ENCODE measurements at regions of chr10 and their contacts with region 1.

Region 1: GRCh38 chr10:117537436-117537903 is 5.1 kb upstream of the EMX2 start:
- DNase-seq: no peak
- H3K4me3 ChIP-seq: no peak overlapping the region
- H3K27ac ChIP-seq: no peak overlapping the region
- H3K4me1 ChIP-seq: no peaks in the 10 kb centered on the region
- H3K27me3 ChIP-seq: peaks cover 100% of the 10 kb centered on the region
- CTCF ChIP-seq: no peak; the same call in 1 of the 2 replicates

Region 2: GRCh38 chr10:117757086-117757720 is 219.7 kb after region 1 on chr10:
- CTCF ChIA-PET with region 1: no interaction called
- POLR2A ChIA-PET with region 1: no interaction called
- intact Hi-C with region 1: loop called (anchors 10 kb)
- DNase-seq: no peak
- H3K4me3 ChIP-seq: no peak overlapping the region
- H3K27ac ChIP-seq: no peak overlapping the region
- H3K4me1 ChIP-seq: no peaks in the 10 kb centered on the region
- H3K27me3 ChIP-seq: peaks cover 56% of the 10 kb centered on the region
- CTCF ChIP-seq: no peak

Region 3: GRCh38 chr10:117876210-117876609 is 338.7 kb after region 1 on chr10:
- CTCF ChIA-PET with region 1: no interaction called
- POLR2A ChIA-PET with region 1: no interaction called
- intact Hi-C with region 1: no loop called
- DNase-seq: no peak
- H3K4me3 ChIP-seq: no peak overlapping the region
- H3K27ac ChIP-seq: no peak overlapping the region
- H3K4me1 ChIP-seq: no peaks in the 10 kb centered on the region
- H3K27me3 ChIP-seq: peaks cover 16% of the 10 kb centered on the region
- CTCF ChIP-seq: no peak

Region 4: GRCh38 chr10:118046395-118047156 is 509.1 kb after region 1 on chr10 and contains the start of gene RAB11FIP2:
- CTCF ChIA-PET with region 1: no interaction called
- POLR2A ChIA-PET with region 1: no interaction called
- intact Hi-C with region 1: loop called (anchors 10 kb)
- DNase-seq: peak; percentile 92
- H3K4me3 ChIP-seq: peak within 1 kb of the TSS; percentile 70
- H3K27ac ChIP-seq: peak within 1 kb of the TSS; percentile 93
- H3K4me1 ChIP-seq: peaks cover 21% of the 10 kb centered on the region
- H3K27me3 ChIP-seq: no peaks in the 10 kb centered on the region
- CTCF ChIP-seq: peak; percentile 40
- total RNA-seq, gene RAB11FIP2: 18.5 and 20.4 TPM in 2 replicates

Region 5: DNA sequence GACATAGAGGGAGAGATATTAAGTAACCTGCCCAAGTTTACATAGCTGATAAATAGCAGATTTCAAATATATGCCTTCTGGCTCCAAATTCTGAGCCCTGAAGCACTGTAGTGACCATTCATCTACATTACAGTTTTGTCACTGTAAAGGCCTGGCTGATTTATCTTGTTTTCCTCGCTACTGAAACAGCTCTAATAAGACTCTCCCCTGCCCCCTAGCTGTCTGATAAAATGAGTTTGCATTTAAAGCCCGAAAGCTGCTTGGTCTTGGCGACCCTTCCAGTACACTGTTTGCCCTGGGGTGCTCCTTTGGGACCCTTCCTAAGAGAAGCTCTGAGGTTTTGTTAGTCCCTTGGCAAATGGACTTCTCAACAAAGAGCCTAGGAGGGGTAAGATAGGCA is 569.0 kb after region 1 on chr10:
- CTCF ChIA-PET with region 1: no interaction called
- POLR2A ChIA-PET with region 1: no interaction called
- intact Hi-C with region 1: loop called (anchors 5 kb)
- DNase-seq: peak; percentile 31
- H3K4me3 ChIP-seq: no peak overlapping the region
- H3K27ac ChIP-seq: no peak overlapping the region
- H3K4me1 ChIP-seq: no peaks in the 10 kb centered on the region
- H3K27me3 ChIP-seq: peaks cover 58% of the 10 kb centered on the region
- CTCF ChIP-seq: peak; percentile 63

Region 6: GRCh38 chr10:118241229-118242137 is 704.0 kb after region 1 on chr10:
- CTCF ChIA-PET with region 1: no interaction called
- POLR2A ChIA-PET with region 1: no interaction called
- intact Hi-C with region 1: loop called (anchors 1 kb)
- DNase-seq: peak; percentile 82
- H3K4me3 ChIP-seq: no peak overlapping the region
- H3K27ac ChIP-seq: no peak overlapping the region
- H3K4me1 ChIP-seq: no peaks in the 10 kb centered on the region
- H3K27me3 ChIP-seq: peaks cover 93% of the 10 kb centered on the region
- CTCF ChIP-seq: peak; percentile 90

Measured in A673 (cell line).